H1 (cell line): ENCODE measurements at regions of chr4 and their contacts with region 1.

Region 1: DNA sequence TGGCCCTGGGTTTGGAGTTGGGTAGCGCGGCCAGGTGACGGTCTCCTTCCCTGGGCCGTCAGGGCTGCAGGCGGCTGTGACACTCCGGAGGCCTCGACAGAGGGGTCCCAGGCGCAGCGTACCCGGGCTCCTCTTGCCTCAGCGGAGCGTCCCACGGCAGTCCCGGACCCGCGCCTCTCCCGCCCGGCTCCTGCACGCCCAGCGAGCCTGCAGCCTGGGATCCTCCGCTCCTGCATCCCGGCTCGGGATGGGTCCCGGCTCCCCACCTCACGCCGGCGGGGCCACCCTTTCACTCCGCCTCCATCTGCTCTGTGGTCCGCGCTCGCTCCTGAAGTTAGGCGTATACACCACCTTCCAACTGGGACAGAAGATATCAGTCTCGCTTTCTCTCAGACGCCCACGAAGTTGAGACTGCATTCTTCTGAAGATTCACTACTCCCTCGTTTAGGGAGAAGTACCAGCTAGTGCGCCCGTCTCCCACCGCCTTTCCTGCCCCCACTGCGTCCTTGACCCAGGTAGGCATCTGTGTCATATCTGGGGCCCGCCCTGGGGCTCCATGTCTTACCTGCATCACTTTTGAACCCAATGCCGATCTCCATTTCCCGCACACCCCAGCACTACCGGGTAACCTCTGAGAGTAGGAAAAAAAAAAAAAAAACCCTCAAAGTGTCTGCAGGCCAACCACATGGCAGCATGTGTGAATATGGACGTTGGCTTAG is 32.3 kb upstream of the KDR start:
- DNase-seq: peak in 1 of 2 experiments; percentile 55
- H3K4me3 ChIP-seq: no peak overlapping the region
- H3K27ac ChIP-seq: no peak overlapping the region
- H3K4me1 ChIP-seq: peaks cover 0 to 2% (median 0%) of the 10 kb centered on the region in 4 experiments; a peak in 1 of 7 replicates
- H3K27me3 ChIP-seq: peaks cover 0 to 1% (median 0%) of the 10 kb centered on the region in 4 experiments; a peak in 1 of 7 replicates
- CTCF ChIP-seq: no peak
- EP300 ChIP-seq: no peak
- POLR2A ChIP-seq: no peak
- RAD21 ChIP-seq: no peak

Region 2: DNA sequence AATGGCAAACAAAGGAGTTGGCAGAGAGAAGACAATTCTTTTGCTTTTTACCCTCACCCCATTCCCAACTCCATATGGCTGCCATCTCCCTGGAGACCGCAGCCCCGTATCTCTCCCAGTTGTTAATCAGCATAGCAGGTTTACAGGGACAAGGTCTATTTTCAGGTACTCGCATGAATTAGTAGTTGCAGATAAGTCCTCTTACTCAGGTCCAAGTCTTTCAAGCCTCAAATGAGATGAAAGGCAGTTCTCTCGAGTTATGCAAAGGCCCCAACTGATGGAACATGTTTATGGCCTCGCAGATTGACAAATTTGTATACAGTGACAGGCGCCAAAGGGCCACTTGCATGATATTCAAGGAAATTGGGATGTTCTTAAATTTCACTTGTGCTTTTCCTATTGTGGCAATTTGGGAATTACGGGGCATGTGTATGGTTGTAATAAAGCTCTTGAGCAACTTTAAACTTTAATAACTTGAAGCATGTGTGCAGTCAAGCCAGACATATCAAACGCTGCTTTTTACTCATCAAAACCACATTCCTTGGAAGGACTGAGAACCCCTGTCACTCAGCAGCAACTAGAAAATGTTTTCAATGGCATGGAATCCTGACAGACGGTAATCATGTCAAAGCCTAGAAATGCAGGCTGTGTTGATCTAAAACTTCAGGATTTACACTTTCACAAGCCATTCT is 77.4 kb before region 1 on chr4:
- CTCF ChIA-PET with region 1: no interaction called
- POLR2A ChIA-PET with region 1: no interaction called
- DNase-seq: no peak
- H3K4me3 ChIP-seq: no peak overlapping the region
- H3K27ac ChIP-seq: 0 out of 2 replicates have a peak overlapping the region, but pooled peaks have one; percentile 21
- H3K4me1 ChIP-seq: peaks cover 0 to 9% (median 0%) of the 10 kb centered on the region in 4 experiments; a peak in 2 of 7 replicates
- H3K27me3 ChIP-seq: no peaks in the 10 kb centered on the region
- CTCF ChIP-seq: no peak
- EP300 ChIP-seq: no peak
- POLR2A ChIP-seq: no peak
- RAD21 ChIP-seq: no peak

Region 3: GRCh38 chr4:55132775-55133174 is 24.9 kb before region 1 on chr4:
- CTCF ChIA-PET with region 1: no interaction called
- POLR2A ChIA-PET with region 1: no interaction called
- DNase-seq: peak in 1 of 2 experiments; percentile 65
- H3K4me3 ChIP-seq: peak overlapping the region in 1 of 4 experiments; percentile 34; a peak in 2 of 8 replicates
- H3K27ac ChIP-seq: no peak overlapping the region; the same call in 1 of the 2 replicates
- H3K4me1 ChIP-seq: peaks cover 0 to 16% (median 1%) of the 10 kb centered on the region in 4 experiments; a peak in 4 of 7 replicates
- H3K27me3 ChIP-seq: no peaks in the 10 kb centered on the region
- CTCF ChIP-seq: no peak
- EP300 ChIP-seq: peak in 1 of 2 experiments; percentile 78; a peak in 1 of 3 replicates
- POLR2A ChIP-seq: 0 out of 3 replicates have a peak, but pooled peaks of 1 of the 2 experiments have one; percentile 34
- RAD21 ChIP-seq: no peak

Region 4: DNA sequence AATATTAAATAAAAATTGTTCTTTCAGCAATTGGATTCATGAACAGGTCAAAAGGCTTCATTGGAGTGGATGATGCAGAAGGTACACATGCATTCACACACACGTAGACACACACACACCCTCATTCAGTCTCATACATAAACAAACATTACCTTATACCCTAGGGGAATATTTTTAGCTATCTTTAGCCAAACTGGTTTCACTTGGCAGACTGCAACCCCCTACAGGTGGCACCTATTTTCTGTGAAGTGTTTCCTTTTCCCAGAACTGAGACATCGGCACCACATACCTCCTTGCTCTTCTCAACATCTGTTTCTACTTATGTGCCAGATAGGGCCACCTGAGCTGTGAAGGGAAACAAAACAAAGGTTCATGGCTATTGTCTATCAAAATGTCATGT is 13.9 kb before region 1 on chr4:
- CTCF ChIA-PET with region 1: interaction called, 10 read pairs
- POLR2A ChIA-PET with region 1: no interaction called
- DNase-seq: no peak
- H3K4me3 ChIP-seq: no peak overlapping the region
- H3K27ac ChIP-seq: no peak overlapping the region
- H3K4me1 ChIP-seq: no peaks in the 10 kb centered on the region
- H3K27me3 ChIP-seq: no peaks in the 10 kb centered on the region
- CTCF ChIP-seq: no peak
- EP300 ChIP-seq: no peak
- POLR2A ChIP-seq: no peak
- RAD21 ChIP-seq: no peak